GM18951 (cell line): ENCODE measurements at regions of chr10 and their contacts with region 1.

Region 1: DNA sequence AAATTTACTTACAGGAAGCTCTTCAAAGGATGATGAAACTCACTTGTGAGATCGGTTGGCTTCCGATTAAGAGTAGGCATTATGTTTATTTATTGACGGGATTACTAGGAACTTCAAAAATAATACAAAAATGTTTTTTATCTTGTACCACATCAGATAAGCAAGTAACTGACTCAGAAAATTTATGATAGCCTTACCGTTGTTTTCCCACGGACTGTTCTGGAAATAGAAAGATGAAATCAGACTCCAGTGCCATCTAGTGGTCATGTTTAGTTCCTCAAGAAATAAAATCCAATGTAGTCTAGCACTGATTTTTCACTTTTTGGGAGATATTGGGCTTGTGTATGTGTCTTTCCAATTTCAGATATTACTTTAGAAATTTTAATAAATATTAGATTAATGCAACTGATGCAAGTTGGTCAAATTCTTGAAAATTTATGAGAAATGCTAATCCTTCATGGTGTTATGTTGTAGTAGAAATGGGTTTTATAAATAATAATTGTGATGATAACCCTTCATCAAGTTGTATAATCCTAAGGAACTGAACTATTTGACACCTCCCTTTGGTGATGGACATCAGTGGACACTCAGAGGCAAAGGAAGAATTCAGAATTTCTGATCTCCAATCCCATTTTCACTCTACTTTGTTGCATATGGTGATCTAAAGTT is 168.8 kb downstream of the TMEM26 start:
- POLR2A ChIP-seq: no peak

Region 2: DNA sequence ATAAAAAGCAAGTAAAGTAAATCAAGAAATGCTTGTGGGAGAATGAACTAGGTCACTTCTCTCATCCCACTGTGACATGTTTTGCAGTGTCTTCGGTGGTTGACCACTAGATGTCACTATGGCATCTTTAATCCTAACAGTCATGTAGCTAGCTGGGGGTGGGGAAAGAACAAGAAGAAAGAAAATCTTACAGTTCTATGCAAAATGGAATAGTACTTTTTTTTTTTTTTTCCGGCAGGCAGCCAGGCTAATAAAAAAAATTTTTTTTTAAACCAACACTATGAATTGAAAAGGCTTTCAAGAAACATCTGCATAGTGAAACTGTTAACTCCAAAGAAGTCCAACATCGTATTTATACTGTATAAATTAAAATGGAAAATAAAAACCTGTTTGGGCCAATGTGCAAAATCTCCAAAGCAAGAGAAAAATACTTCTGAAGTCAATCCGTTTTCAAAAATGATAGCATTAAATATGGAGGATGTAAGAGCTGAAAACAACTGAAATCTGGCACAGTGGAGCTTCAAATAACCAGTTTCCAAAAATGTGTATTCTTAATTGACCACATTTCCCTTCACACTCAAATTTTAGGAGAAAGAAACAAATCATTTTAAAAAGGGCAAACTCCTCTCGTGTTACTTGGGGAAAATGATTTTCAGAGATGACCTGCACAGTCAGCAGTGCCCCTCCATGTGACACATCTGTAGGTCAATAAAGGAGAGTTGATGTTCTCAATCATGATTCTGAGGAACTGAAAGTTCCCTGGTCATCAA is 467.5 kb before region 1 on chr10:
- in situ Hi-C with region 1: loop called (anchors 25 kb)
- POLR2A ChIP-seq: no peak

Region 3: GRCh38 chr10:61091531-61091930 is 192.8 kb before region 1 on chr10:
- in situ Hi-C with region 1: no loop called
- POLR2A ChIP-seq: no peak

Region 4: DNA sequence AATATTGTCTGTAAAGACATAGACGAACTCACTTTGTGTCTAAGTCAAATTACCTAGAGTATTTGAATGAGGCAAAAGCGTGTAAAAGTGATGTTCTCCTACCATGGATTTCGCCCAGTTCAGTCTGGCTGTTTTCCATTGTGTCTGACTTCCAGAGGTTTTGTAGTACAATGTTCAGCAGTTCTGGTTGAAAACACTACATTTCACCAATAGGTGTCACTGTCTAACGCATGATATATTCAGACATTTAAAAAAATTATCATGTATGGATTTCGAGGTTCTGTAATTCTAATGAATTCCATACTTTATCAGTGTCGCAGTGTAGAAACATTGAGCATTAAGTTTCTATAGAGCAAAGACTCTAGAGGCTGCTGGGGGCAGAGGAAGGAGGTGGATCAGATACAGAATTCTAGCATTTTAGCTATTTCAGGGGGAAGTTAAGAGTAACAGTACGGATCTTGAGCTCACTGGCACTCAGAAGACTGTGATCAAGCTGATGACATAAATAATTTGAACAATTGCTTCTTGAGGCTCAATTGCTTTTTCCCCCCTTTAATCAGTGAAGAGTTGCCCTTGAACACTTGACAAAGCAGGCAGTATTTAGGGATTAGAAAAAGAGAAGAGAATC is 143.5 kb before region 1 on chr10:
- in situ Hi-C with region 1: loop called (anchors 10 kb)
- POLR2A ChIP-seq: no peak